Panc1 (cell line): ENCODE measurements at regions of chr11 and their contacts with region 1.

Region 1: DNA sequence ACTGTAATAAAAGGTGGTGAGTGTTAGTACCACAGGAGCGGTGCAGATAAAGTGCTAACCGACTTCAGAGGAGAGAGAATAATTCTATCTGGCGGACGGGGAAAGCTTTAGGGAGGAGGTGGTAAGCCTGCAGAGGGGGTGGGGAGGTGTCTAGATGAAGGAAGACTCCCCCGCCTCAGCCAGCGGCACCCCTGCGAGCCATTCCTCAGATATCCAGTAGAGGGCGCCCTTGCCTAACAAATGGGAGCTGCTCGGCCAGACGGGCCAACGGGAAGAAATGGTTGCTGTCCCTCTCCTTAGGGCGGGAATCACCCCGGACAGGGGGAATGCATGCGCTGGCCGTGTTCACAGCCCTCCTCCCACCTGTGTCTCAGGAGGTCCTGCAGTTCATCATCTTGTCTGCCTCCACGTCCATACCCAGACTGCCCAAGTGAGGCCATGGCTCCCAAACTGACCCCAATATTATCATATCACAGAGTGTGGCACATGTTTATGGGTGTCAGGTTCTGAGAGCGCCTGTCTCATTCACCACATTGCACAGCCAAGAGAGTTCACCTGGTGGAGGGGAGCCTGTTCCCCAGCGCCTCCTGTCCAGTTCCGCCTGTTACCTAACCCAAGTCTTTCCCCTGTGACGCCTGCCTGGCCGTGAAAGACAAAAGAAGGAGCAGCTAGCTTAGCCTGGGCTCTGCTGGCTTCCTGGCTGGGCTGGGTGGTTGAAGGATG is 85.5 kb downstream of the ST3GAL4 start:
- DNase-seq: peak; percentile 46
- ATAC-seq: peak; percentile 89
- H3K4me3 ChIP-seq: peak overlapping the region in 1 of 2 experiments; percentile 12; a peak in 1 of 4 replicates
- H3K27ac ChIP-seq: no peak overlapping the region
- H3K4me1 ChIP-seq: peaks cover 4% of the 10 kb centered on the region; the same call in 1 of the 2 replicates
- H3K27me3 ChIP-seq: no peaks in the 10 kb centered on the region
- CTCF ChIP-seq: peak; percentile 96

Region 2: GRCh38 chr11:126452241-126453101 is 11.5 kb after region 1 on chr11:
- CTCF ChIA-PET with region 1: no interaction called
- POLR2A ChIA-PET with region 1: no interaction called
- in situ Hi-C with region 1: no loop called
- intact Hi-C with region 1: no loop called
- DNase-seq: no peak
- ATAC-seq: no peak
- H3K4me3 ChIP-seq: no peak overlapping the region
- H3K27ac ChIP-seq: no peak overlapping the region
- H3K4me1 ChIP-seq: no peaks in the 10 kb centered on the region
- H3K27me3 ChIP-seq: no peaks in the 10 kb centered on the region; the same call in 1 of the 2 replicates
- CTCF ChIP-seq: no peak

Region 3: GRCh38 chr11:126480410-126481302 is 39.7 kb after region 1 on chr11:
- CTCF ChIA-PET with region 1: interaction called, 17 read pairs
- POLR2A ChIA-PET with region 1: no interaction called
- in situ Hi-C with region 1: no loop called
- intact Hi-C with region 1: no loop called
- DNase-seq: peak; percentile 59
- ATAC-seq: peak; percentile 91
- H3K4me3 ChIP-seq: peak overlapping the region in 1 of 2 experiments; percentile 32; a peak in 3 of 4 replicates
- H3K27ac ChIP-seq: peak overlapping the region; percentile 85
- H3K4me1 ChIP-seq: peaks cover 3% of the 10 kb centered on the region; the same call in 1 of the 2 replicates
- H3K27me3 ChIP-seq: no peaks in the 10 kb centered on the region
- CTCF ChIP-seq: peak; percentile 98

Region 4: DNA sequence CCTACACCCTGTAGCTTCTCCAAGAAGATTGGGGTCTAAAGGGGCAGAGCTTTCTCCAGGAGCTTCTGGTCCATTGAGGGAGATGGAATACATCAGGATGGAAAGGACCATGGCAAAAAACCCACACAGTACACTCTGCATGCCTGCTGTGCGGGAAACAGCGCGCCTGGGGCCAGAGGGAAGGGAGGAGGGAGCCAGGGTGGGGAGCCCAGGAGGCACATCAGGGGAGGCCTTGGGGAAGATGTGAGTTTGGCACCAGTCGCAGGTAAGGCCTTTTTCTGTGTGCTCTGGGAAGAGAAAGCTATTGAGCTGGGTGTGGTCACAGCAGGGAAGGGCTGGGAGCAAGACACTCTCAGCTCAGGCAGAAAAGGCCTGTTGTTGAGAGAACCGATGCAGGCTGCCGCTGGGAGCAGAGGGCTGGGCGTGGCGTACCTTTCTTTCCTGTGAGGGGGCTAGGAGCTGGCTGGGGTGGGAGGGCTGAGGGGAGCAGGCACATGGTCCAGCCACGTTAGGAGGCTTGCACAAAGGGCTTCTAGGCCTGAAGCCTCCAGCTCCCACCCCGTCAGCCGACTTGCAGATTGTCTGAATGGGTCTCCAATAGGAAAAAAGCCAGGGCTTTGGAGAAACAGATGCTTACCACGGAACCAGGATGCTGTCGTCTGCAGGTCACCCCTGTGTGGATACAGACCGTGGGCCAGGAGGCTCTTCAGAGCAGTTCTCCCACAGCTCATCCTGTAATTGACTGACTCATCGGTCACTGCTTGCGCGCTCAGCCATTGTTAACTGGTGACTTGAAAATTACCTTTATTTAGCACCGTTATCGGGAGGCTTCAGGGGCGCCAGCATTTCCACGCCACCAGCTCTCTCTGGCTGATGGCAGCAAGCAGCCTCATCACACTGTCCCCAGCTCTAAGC is 151.8 kb after region 1 on chr11:
- CTCF ChIA-PET with region 1: no interaction called
- POLR2A ChIA-PET with region 1: no interaction called
- in situ Hi-C with region 1: no loop called
- intact Hi-C with region 1: loop called (anchors 10 kb)
- DNase-seq: no peak
- ATAC-seq: no peak
- H3K4me3 ChIP-seq: no peak overlapping the region
- H3K27ac ChIP-seq: no peak overlapping the region
- H3K4me1 ChIP-seq: no peaks in the 10 kb centered on the region
- H3K27me3 ChIP-seq: peaks cover 6% of the 10 kb centered on the region
- CTCF ChIP-seq: no peak

Region 5: GRCh38 chr11:126716456-126717083 is 275.6 kb after region 1 on chr11:
- CTCF ChIA-PET with region 1: no interaction called
- POLR2A ChIA-PET with region 1: no interaction called
- in situ Hi-C with region 1: no loop called
- intact Hi-C with region 1: loop called (anchors 10 kb)
- DNase-seq: peak; percentile 18
- ATAC-seq: peak; percentile 56; the same call in 1 of the 2 replicates
- H3K4me3 ChIP-seq: no peak overlapping the region
- H3K27ac ChIP-seq: no peak overlapping the region
- H3K4me1 ChIP-seq: no peaks in the 10 kb centered on the region
- H3K27me3 ChIP-seq: peaks cover 14% of the 10 kb centered on the region
- CTCF ChIP-seq: peak; percentile 80

Region 6: GRCh38 chr11:126989942-126990715 is 549.2 kb after region 1 on chr11:
- CTCF ChIA-PET with region 1: no interaction called
- POLR2A ChIA-PET with region 1: no interaction called
- in situ Hi-C with region 1: no loop called
- intact Hi-C with region 1: loop called (anchors 2 kb)
- DNase-seq: peak; percentile 39
- ATAC-seq: peak; percentile 92
- H3K4me3 ChIP-seq: no peak overlapping the region
- H3K27ac ChIP-seq: no peak overlapping the region
- H3K4me1 ChIP-seq: no peaks in the 10 kb centered on the region
- H3K27me3 ChIP-seq: peaks cover 27% of the 10 kb centered on the region
- CTCF ChIP-seq: peak; percentile 99

Region 7: GRCh38 chr11:128157423-128158298 is 1716.7 kb after region 1 on chr11:
- CTCF ChIA-PET with region 1: no interaction called
- POLR2A ChIA-PET with region 1: no interaction called
- in situ Hi-C with region 1: no loop called
- intact Hi-C with region 1: loop called (anchors 5 kb)
- DNase-seq: peak; percentile 81
- ATAC-seq: peak; percentile 95
- H3K4me3 ChIP-seq: peak overlapping the region in 1 of 2 experiments; percentile 24; a peak in 2 of 4 replicates
- H3K27ac ChIP-seq: no peak overlapping the region
- H3K4me1 ChIP-seq: no peaks in the 10 kb centered on the region
- H3K27me3 ChIP-seq: peaks cover 7% of the 10 kb centered on the region; the same call in 1 of the 2 replicates
- CTCF ChIP-seq: peak; percentile 97